ENCODE measurements at regions of chr11 and their contacts with region 1.

Region 1: DNA sequence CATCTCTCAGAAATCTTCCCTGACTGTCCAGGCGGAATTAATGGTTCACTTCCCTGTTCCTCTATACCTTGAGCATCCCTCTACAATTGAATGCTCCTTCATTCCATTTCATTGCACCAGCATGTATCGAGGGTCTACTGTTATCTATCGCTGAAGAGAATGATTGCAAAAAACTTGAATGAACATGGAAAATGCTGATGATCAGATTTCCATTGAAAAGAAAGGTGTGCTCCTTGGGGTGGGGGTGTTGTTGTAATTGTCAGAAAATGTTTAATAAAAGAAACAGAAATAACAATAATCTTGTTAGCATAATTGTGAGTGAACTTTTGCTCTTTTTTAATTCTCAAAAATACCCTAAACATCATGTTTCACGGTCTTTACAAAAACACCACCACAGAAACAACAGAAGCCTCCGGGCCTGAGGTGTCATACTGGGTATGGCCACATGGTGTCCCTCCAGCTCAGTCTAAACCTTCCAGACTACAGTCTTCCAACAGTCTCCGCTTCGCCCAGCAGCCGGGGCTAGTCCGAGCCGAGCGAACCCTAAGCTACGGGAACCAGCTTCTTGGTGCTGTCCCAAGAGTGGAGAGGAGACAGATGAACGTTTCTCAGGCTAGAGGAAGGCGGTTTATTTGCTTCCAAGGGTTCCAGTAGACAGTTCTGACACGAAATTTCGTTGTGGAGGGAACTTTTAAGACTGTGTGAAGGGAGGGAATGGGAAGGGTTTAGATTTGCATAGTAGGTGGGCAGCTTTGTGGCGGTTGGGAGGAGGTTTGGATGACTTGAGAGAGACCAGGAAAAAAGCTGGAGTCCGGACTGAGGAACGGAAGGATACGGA is 75.8 kb upstream of the ZBED5 start:
- DNase-seq: peak; percentile 83
- H3K4me3 Mint-ChIP-seq: peak overlapping the region; percentile 63
- H3K27ac Mint-ChIP-seq: no peak overlapping the region
- H3K4me1 Mint-ChIP-seq: peaks cover 15% of the 10 kb centered on the region
- H3K27me3 Mint-ChIP-seq: peaks cover 49% of the 10 kb centered on the region

Region 2: DNA sequence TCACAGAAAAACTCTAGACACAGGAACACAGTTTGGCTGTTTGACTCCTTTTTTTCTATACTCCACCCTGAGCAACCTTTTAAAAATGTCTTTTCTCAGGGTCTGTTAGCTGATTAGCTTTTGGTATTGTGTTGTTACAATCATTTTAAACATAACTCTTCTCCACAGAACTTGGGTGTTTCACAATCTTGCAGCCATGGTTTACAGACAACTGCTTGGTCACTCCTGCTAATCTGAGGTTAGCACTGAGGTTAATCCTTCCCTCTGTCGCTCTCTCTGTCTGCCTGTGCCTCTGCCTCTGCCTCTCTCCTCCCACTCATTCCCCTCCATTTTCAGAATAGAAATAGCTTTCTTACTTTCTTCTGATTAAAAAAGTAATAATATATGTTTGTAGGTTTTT is 13.5 kb before region 1 on chr11:
- CTCF ChIA-PET with region 1: interaction called, 11 read pairs
- POLR2A ChIA-PET with region 1: no interaction called
- DNase-seq: no peak
- H3K4me3 Mint-ChIP-seq: no peak overlapping the region
- H3K27ac Mint-ChIP-seq: no peak overlapping the region
- H3K4me1 Mint-ChIP-seq: peaks cover 10% of the 10 kb centered on the region
- H3K27me3 Mint-ChIP-seq: peaks cover 3% of the 10 kb centered on the region

Region 3: GRCh38 chr11:10943968-10944367 is 10.3 kb after region 1 on chr11:
- CTCF ChIA-PET with region 1: interaction called, 19 read pairs
- POLR2A ChIA-PET with region 1: no interaction called
- DNase-seq: no peak
- H3K4me3 Mint-ChIP-seq: no peak overlapping the region
- H3K27ac Mint-ChIP-seq: no peak overlapping the region
- H3K4me1 Mint-ChIP-seq: peaks cover 4% of the 10 kb centered on the region
- H3K27me3 Mint-ChIP-seq: peaks cover 21% of the 10 kb centered on the region

Region 4: DNA sequence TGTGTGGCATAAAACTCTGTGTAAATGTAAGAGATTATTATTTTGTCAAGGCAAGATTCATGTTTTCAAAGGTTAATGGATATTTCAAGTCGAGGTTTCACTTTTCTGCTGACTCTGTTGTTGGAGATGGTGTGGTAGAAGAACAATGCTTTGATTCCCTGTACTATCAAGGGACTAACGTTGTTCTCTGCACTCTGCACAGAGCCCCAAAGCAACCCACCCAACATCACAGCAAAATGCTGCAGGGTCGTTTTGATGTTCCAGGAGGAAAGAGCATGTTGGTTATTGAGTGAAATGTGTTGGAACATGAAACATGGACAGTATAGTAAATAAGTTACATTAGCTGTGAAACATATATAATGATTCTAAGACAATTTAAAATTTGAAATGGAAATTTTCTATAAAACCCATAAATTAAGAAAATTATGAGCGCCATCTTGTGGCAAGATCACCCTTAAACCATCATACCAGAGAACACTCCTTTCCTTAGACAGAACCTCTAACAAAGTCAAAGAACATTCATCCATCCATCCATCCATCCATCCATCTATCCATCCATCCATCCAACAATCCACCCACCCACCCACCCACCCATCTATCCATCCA is 88.6 kb after region 1 on chr11:
- CTCF ChIA-PET with region 1: interaction called, 72 read pairs
- POLR2A ChIA-PET with region 1: interaction called, 5 read pairs
- DNase-seq: no peak
- H3K4me3 Mint-ChIP-seq: no peak overlapping the region
- H3K27ac Mint-ChIP-seq: no peak overlapping the region
- H3K4me1 Mint-ChIP-seq: no peaks in the 10 kb centered on the region
- H3K27me3 Mint-ChIP-seq: no peaks in the 10 kb centered on the region